Dendritic cell treated with granulocyte-macrophage colony-stimulating factor and Interleukin-4, amounts not matched to agents 40 ng/mL and 50 ng/mL, for 4 days (primary cell): ENCODE measurements at regions of chr16 and their contacts with region 1.

Region 1: DNA sequence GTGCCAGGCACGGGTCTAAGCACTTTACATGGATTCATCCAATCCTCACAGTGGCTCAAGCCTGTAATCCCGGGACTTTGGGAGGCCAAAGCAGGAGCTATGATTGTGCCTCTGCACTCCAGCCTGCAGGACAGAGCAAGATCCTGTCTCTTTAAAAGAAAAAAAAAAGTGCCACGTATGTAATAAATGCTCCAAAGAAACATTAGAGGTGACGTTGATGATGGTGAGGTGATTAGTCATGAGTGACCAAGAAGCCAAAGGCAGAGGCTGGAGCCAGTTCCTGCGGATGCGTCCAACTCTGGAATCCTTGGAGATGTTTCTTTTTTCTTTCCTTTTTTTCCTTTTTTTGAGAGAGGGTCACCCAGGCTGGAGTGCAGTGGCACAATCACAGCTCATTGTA is 59.4 kb upstream of the SIAH1 start:
- H3K4me3 Mint-ChIP-seq: no peak overlapping the region
- H3K27ac Mint-ChIP-seq: peak overlapping the region; percentile 89
- H3K4me1 Mint-ChIP-seq: peaks cover 48% of the 10 kb centered on the region
- H3K27me3 Mint-ChIP-seq: no peaks in the 10 kb centered on the region

Region 2: GRCh38 chr16:48409839-48410611 is 34.5 kb before region 1 on chr16:
- intact Hi-C with region 1: loop called (anchors 5 kb)
- H3K4me3 Mint-ChIP-seq: no peak overlapping the region
- H3K27ac Mint-ChIP-seq: peak overlapping the region; percentile 57
- H3K4me1 Mint-ChIP-seq: peaks cover 37% of the 10 kb centered on the region
- H3K27me3 Mint-ChIP-seq: peaks cover 1% of the 10 kb centered on the region

Region 3: GRCh38 chr16:48487287-48487686 is 42.7 kb after region 1 on chr16:
- intact Hi-C with region 1: loop called (anchors 5 kb)
- H3K4me3 Mint-ChIP-seq: no peak overlapping the region
- H3K27ac Mint-ChIP-seq: no peak overlapping the region
- H3K4me1 Mint-ChIP-seq: peaks cover 16% of the 10 kb centered on the region
- H3K27me3 Mint-ChIP-seq: peaks cover 23% of the 10 kb centered on the region